ENCODE measurements at regions of chr18 and their contacts with region 1.

Region 1: DNA sequence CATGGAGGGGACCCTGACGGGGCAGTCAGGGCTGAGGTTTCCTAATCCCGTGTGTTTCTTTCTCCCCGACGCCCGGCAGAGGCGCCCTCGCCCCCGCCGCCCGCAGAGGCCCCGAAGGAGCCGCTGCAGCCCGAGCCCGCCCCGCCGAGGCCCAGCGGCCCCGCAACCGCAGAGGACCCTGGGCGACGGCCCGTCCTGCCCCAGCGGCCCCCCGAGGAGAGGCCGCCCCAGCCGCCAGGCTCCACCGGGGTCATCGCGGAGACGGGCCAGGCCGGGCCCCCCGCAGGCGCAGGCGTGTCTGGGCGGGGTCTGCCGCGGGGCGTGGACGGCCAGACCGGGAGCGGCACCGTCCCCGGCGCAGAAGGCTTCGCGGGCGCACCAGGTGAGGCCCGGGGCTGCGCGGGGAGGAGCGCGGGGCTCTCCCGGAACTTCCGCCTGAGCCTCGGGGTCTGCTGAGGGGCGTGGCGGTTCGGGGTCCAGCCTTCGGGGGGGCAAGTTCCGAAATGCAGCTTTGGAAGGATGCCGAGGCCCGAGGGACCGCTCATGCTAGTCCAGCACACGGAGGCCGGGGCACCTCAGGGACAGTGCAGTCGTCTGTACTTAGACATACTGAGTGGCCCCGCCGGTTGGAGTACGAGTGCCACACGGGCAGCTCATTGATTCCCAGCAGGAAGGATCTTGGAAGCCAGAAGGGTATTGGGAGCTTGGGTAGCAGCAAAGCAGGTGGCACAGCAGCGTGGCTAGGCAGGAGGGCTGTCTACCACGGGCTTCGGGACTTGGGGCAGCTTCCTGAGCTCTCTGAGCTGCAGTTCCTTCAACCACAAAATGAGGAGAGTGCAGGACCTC is 60.1 kb downstream of the EMILIN2 start:
- DNase-seq: peak; percentile 75

Region 2: GRCh38 chr18:2787225-2787624 is 119.7 kb before region 1 on chr18:
- intact Hi-C with region 1: loop called (anchors 10 kb)
- DNase-seq: no peak

Region 3: GRCh38 chr18:2857491-2858131 is 49.3 kb before region 1 on chr18:
- intact Hi-C with region 1: loop called (anchors 2 kb)
- DNase-seq: peak; percentile 91

Measured in cardiac septum (tissue), 1 donor.